WTC11 (cell line): ENCODE measurements at regions of chr11 and their contacts with region 1.

Region 1: GRCh38 chr11:72471005-72471898 is 36.9 kb upstream of the CLPB start:
- DNase-seq: peak; percentile 72
- ATAC-seq: peak; percentile 97
- H3K4me3 Mint-ChIP-seq: peak overlapping the region; percentile 27
- H3K27ac Mint-ChIP-seq: peak overlapping the region; percentile 28; the same call in 1 of the 2 replicates
- H3K4me1 Mint-ChIP-seq: peaks cover 7% of the 10 kb centered on the region
- H3K27me3 Mint-ChIP-seq: peaks cover 16% of the 10 kb centered on the region
- CTCF ChIP-seq: peak; percentile 58

Region 2: DNA sequence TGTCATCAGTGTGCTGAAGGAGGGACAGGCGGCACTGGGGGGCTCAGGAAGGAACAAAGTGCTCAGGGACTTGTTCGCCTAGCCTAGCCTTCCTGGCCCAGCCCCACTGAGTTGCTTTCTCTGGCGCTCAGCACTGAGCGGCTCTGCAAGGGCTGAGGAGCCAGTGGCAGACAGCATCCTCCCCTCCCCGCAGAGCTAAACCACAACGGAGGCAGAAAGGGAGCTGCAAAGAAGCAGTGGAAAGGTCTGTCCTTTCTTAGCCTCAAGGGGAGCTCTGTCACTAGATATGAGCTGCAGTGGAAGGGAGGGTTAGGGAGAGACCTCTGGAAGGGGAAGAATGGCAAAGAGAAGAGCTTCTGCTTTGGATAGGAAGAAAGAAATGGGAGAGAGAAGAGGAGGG is 137.6 kb before region 1 on chr11:
- CTCF ChIA-PET with region 1: interaction called, 10 read pairs
- POLR2A ChIA-PET with region 1: no interaction called
- DNase-seq: peak; percentile 69
- ATAC-seq: peak; percentile 99
- H3K4me3 Mint-ChIP-seq: no peak overlapping the region
- H3K27ac Mint-ChIP-seq: peak overlapping the region; percentile 43; the same call in 1 of the 2 replicates
- H3K4me1 Mint-ChIP-seq: peaks cover 13% of the 10 kb centered on the region
- H3K27me3 Mint-ChIP-seq: no peaks in the 10 kb centered on the region
- CTCF ChIP-seq: no peak

Region 3: GRCh38 chr11:72378704-72379384 is 92.4 kb before region 1 on chr11:
- CTCF ChIA-PET with region 1: no interaction called
- POLR2A ChIA-PET with region 1: no interaction called
- DNase-seq: no peak
- ATAC-seq: no peak
- H3K4me3 Mint-ChIP-seq: no peak overlapping the region
- H3K27ac Mint-ChIP-seq: no peak overlapping the region
- H3K4me1 Mint-ChIP-seq: no peaks in the 10 kb centered on the region; the same call in 1 of the 2 replicates
- H3K27me3 Mint-ChIP-seq: no peaks in the 10 kb centered on the region
- CTCF ChIP-seq: no peak

Region 4: DNA sequence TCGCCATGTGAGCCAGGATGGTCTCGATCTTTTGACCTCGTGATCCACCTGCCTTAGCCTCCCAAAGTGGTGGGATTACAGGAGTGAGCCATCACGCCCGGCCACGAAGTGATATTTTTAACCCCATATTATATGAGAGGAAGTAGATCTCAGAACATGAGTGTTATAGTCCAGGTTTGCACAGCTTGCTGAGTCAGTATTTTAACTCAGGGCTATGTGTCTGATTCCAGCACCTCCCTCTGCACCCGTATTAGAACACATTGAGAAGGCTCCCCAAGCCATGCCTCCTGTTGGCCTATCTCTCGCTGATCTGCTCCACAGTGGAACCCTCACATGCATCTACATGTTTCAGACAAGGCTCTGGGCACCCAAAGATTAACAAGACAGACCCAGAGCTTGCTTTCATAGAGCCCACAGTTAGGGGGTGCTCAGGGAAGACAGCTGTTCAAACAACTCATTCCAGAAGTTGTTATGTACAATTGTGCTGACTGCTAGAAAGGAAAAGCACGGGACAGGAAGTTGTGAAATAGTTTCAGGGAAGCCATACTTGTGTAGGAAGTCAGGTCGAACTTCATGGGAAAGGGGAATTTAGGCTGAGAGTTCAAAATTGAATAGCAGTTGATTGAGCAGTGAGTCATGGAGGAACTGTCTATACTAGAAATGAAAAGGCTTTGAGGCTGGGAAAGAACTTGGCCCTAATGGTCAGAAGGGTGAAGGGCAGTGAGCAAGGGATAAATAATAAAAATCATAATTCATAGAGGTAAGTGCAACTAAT is 12.3 kb after region 1 on chr11:
- CTCF ChIA-PET with region 1: interaction called, 51 read pairs
- POLR2A ChIA-PET with region 1: no interaction called
- DNase-seq: no peak
- ATAC-seq: no peak
- H3K4me3 Mint-ChIP-seq: no peak overlapping the region
- H3K27ac Mint-ChIP-seq: no peak overlapping the region
- H3K4me1 Mint-ChIP-seq: no peaks in the 10 kb centered on the region
- H3K27me3 Mint-ChIP-seq: no peaks in the 10 kb centered on the region
- CTCF ChIP-seq: no peak

Region 5: DNA sequence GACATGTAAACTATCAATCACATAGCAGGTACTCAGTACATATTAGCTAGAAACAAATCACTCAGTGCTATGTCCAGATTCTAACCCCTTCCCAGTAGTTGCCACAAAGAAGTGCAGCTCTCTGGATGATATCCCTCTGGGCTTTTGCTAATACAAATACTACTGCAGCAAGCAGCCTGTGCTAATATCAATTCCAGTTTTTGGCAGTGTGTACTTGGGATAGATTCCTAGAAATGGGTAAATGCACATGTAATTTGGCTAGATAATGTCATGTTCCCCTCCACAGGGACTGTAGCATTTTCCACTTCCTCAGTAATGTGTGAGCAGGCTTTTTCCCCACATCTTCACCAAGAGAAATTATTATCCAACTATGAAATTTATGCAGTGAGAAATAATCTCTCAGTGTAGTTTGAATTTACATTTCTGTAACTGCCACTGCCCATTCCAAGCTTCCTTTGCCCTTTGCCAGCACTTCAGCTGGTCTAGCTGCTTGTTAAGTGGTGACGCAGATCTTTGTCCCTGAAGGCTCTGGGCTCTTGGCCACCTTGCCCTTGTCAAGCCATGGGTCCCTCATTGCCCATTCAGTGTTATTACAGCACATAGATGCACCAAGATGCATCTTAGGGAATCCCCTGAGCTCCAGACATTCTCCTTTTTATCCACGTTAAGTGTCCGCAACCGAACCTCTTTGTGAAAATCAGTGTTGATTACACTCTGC is 70.2 kb after region 1 on chr11:
- CTCF ChIA-PET with region 1: interaction called, 215 read pairs
- POLR2A ChIA-PET with region 1: no interaction called
- DNase-seq: no peak
- ATAC-seq: no peak
- H3K4me3 Mint-ChIP-seq: no peak overlapping the region
- H3K27ac Mint-ChIP-seq: no peak overlapping the region
- H3K4me1 Mint-ChIP-seq: peaks cover 11% of the 10 kb centered on the region
- H3K27me3 Mint-ChIP-seq: peaks cover 18% of the 10 kb centered on the region; the same call in 1 of the 2 replicates
- CTCF ChIP-seq: no peak

Region 6: DNA sequence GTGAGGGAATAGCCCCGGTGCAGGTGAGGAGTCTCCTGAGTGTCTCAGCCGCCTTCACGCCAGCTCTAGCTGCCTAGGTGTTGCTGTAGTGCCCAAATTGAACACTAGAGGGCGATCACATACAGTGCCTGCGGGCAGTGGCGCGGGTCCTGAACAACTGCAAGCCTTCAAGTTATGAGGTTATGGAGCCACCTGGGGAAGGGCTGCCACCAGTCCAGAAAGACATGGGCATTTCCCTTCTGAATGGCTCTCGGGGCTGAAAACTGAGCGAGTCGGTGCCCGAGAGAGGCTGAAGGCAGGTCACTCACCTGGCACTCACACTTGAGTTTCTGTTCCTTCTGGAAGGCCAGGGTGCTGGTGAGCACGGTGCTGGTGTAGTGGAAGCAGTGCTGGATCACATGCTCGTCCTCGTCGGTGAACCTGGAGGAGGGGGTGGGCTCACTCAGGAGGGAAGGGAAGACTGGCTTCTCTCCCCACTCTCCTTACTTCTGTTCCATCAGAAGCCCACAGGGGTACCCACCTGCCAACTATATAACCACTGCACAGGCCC is 114.6 kb after region 1 on chr11:
- CTCF ChIA-PET with region 1: interaction called, 65 read pairs
- POLR2A ChIA-PET with region 1: no interaction called
- DNase-seq: peak; percentile 77
- ATAC-seq: peak; percentile 50
- H3K4me3 Mint-ChIP-seq: peak overlapping the region; percentile 78
- H3K27ac Mint-ChIP-seq: no peak overlapping the region
- H3K4me1 Mint-ChIP-seq: peaks cover 21% of the 10 kb centered on the region
- H3K27me3 Mint-ChIP-seq: peaks cover 91% of the 10 kb centered on the region
- CTCF ChIP-seq: peak; percentile 97

Region 7: DNA sequence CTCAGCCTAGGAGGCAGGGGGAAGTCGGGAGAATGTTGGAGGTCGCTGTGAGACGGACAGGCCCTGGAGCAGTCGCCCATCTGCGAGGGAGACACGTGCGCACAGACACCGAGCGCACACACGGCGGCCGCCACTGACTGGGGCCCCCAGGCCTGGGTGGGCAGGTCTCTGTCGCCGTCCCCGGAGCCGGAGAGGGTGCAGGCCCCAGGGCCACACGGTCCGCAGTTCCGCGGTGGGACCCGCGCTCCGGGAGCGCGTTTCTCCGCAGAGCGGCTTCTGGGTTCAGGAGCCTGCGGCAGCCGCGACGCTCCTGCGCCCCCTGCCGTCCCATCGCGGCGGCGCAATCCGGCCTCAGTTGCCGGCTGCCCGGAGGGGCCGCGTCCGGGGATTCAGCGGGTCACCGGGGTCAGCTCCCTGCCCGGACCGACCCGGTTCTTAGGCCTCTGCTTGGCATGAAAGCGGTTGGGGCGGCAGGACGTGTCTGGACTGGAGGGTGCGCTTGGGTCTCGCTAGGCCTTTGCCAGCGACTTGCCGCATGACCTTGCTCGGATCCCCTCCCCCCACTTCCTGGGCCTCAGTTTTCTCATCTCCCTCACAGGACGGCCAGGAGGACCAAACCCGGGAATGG is 171.7 kb after region 1 on chr11:
- CTCF ChIA-PET with region 1: interaction called, 33 read pairs
- POLR2A ChIA-PET with region 1: no interaction called
- DNase-seq: peak; percentile 74
- ATAC-seq: peak; percentile 79
- H3K4me3 Mint-ChIP-seq: peak overlapping the region; percentile 59
- H3K27ac Mint-ChIP-seq: no peak overlapping the region
- H3K4me1 Mint-ChIP-seq: no peaks in the 10 kb centered on the region
- H3K27me3 Mint-ChIP-seq: peaks cover 26% of the 10 kb centered on the region
- CTCF ChIP-seq: peak; percentile 98

Region 8: GRCh38 chr11:72696866-72697700 is 225.8 kb after region 1 on chr11:
- CTCF ChIA-PET with region 1: no interaction called
- POLR2A ChIA-PET with region 1: no interaction called
- DNase-seq: peak; percentile 81
- ATAC-seq: peak; percentile 92
- H3K4me3 Mint-ChIP-seq: no peak overlapping the region
- H3K27ac Mint-ChIP-seq: no peak overlapping the region
- H3K4me1 Mint-ChIP-seq: no peaks in the 10 kb centered on the region
- H3K27me3 Mint-ChIP-seq: no peaks in the 10 kb centered on the region
- CTCF ChIP-seq: no peak